ENCODE measurements at regions of chr19 and their contacts with region 1.

Region 1: DNA sequence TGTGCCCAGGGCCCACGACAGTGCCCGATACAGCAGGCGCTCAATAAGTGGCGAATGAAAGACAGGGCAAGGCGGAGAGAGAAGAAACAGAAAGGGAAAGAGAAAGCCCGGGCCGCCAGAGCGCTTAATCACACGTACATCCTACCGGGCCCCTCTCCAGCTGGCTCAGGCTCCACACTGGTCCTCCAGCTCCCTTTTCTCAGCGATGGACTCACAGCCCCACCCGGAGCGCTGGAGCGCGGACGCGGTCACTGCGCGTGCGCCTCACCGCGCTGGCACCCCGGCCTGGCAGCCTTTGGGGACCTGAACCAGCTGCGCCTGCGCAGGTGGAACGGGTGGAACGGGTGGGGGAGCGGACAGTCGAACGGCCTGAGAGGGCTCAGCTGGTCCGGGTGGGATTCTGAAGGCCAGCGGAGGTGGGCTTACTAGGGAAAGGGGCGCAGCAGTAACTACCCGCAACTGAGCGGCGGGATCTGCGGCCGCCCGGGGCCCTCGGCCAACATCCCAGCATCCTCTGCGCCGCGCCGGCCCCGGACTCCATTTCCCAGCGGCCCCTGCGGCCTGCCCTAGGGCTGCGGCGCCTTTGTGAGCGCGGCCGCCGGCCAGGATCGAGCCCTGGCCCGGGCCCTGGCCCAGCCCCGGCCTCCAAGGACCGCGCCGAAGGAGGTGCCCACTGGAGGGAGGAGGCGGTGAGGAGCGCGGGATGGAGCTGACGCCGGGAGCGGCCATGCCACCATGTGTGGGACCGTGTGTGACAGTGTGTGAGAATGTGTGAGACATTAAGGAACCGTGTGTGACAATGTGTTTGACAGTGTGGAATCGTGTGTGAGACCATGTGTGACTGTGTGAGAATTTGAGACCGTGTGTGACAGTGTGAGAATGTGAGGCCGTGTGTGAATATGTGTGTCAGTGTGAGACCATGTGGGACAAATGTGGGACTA is at the start of gene ZNF583:
- DNase-seq: peak; percentile 96
- total RNA-seq, gene ZNF583: 7.3 TPM

Region 2: GRCh38 chr19:56309517-56310185 is 94.4 kb before region 1 on chr19:
- intact Hi-C with region 1: no loop called
- DNase-seq: peak; percentile 81

Region 3: DNA sequence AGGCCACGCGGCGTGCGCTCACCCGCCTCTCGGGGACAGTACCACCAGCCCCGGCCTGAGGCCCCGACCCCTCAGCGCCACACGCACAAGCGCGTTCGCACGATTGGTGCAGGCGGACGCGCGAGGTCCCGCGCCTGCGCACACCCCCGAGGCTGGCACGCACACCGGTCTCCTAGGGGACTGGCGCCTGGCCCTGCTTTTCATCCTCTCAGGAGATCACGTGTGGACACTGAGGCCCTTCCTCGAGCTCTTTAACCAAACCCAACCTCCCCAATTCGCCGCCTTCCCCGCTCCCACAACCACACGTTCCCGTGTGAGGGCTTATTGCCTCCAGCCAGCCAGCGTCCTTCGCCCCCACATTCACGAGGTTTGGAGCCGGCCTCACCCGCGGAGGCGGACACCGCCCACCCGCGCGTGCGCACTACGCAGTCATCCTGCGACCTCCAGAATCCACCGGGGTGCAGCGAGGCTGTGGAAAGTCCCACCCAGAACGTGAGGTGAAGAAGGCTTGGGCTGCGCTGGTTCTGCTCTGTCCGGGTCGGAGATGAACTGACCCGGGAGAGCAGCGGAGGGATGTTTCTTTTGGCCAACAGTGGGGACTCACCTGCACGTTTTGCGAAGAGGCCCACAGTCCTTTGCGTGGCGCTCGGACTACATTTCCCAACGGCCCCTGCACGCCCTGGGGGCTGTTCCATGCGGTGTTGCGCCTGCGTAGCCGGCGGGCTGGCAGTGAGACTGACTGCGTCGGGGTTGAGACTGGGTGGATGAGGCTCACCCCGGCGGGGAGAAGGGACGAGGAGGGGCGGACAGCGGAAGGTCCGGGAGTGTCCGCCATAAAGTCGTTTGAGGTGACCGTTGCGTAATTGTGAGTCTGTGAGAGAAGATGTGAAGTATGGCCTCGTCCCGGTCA is 73.7 kb after region 1 on chr19:
- intact Hi-C with region 1: loop called (anchors 1 kb)
- DNase-seq: peak; percentile 94

Measured in cardiac septum (tissue), 1 donor.